ENCODE measurements at regions of chr16 and their contacts with region 1.

Region 1: DNA sequence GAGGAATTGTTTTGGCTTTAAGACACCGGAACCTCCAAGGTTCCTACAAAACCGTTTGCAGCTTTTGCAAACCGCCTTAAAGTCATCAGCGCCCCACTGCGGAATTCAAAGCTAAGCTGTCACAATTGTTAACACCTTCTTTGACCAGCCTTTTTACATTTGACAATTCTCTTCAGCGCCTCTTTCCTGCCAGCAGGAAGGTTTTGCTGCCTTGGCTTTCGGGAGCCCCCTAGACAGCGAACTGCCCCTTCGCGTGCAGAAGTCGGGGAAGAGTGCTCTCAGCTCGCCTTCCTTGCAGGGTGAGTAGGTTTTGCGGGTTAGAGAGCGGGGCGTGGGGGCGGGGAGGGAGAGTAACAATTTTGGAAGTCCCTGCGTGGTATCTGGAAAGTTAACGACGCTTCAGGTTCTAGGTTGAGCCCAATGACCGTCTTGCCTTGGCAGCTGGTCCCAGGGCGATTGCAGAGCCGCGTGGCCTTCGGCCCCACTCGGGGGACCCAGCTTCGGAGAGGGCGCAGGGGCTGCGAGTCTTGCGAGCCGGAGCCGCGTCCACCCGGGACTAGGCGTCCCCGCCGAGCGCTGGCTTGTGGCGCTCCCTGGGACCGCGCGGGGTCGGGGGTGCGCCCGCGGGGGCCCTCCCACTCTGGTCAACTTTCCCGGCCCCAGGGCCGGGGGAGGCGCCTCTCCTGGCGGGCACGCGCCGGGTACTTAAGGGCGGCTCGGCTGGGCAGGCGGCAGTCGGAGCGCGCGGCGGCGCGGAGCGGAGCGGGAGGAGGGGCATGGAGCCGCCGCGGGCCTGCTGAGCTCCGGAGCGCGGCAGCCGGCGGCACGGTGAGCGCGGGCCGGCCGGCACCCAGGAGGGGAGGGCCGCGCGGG is at the start of gene HAS3:
- DNase-seq: no peak
- H3K4me3 ChIP-seq: peak within 1 kb of the TSS; percentile 62
- H3K27ac ChIP-seq: no peak within 1 kb of the TSS
- H3K27me3 ChIP-seq: peaks cover 2% of the 10 kb centered on the region
- CTCF ChIP-seq: no peak
- polyA plus RNA-seq, gene HAS3: 0.62 and 0.92 TPM in 2 replicates

Region 2: DNA sequence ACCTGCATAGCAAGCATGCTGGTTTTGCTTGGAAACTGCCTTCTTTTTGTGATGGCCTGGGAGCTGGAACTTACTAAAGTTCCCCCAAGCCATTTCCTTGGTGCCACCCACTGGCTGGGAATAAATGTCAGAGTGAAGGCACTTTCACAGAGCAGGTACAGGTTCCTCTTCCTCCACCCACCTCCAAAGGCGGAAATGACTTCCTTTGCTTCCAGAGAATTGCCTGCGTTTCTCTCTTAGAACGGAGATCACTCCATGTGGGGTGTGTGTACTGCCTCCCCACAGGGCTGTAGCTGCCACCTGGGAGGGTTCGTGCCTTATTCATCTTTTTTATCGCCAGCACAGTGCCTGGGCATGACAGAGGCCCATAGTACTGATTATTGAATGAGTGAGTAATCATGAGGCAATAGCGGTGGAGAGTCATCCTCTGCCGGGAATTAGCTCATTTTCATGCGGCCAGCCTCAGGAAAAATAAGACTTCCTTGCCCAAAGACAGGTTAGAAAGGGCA is 32.5 kb before region 1 on chr16:
- CTCF ChIA-PET with region 1: interaction called, 12 read pairs
- POLR2A ChIA-PET with region 1: interaction called, 4 read pairs
- DNase-seq: no peak
- H3K4me3 ChIP-seq: no peak overlapping the region
- H3K27ac ChIP-seq: peak overlapping the region; percentile 53
- H3K27me3 ChIP-seq: no peaks in the 10 kb centered on the region
- CTCF ChIP-seq: no peak

Region 3: DNA sequence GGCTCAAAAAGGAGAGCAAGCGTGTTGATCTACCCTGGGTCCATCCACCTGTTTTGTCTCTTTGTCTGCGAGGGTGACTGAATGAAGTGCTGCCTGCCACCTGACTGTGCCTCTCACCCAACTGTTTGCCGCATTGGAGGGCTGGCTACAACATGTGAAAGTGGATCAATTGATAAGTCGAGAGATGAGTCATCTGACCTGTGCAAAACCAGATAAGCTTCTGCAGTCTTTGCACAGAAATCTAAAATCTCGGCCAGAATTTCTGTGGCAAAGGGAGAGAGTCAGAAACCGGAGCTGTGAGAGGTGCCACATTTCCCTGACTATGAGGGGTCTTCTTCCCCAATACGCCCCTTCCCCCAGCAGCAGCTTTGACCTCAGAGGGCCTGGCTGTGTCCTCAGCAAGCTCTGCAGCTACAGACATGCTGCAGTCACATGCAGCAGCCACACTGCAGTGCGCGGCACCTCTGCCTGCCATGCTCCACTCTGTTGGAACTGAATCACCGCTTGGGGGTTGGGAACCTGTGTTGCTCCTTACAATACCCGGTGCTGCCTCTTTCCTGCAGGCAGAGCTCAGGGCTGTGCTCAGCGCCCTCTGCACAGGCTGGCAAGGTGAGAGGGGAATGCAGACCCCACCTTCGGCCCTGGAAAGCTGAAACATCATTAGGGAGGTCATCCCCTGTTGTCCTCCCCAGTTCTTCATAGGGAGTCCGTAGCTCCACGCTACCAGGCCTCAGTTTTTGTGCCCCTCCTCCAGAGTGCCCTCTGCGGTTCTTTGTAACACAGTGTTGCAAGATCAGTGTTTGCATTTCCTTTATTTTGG is 16.4 kb before region 1 on chr16:
- CTCF ChIA-PET with region 1: interaction called, 4 read pairs
- POLR2A ChIA-PET with region 1: interaction called, 12 read pairs
- DNase-seq: no peak
- H3K4me3 ChIP-seq: no peak overlapping the region
- H3K27ac ChIP-seq: no peak overlapping the region
- H3K27me3 ChIP-seq: no peaks in the 10 kb centered on the region
- CTCF ChIP-seq: no peak

Region 4: GRCh38 chr16:69157196-69157595 is 51.5 kb after region 1 on chr16:
- CTCF ChIA-PET with region 1: no interaction called
- POLR2A ChIA-PET with region 1: no interaction called
- DNase-seq: no peak
- H3K4me3 ChIP-seq: no peak overlapping the region
- H3K27ac ChIP-seq: no peak overlapping the region
- H3K27me3 ChIP-seq: no peaks in the 10 kb centered on the region
- CTCF ChIP-seq: no peak